OCI-LY7 (cell line): ENCODE measurements at regions of chr11 and their contacts with region 1.

Region 1: DNA sequence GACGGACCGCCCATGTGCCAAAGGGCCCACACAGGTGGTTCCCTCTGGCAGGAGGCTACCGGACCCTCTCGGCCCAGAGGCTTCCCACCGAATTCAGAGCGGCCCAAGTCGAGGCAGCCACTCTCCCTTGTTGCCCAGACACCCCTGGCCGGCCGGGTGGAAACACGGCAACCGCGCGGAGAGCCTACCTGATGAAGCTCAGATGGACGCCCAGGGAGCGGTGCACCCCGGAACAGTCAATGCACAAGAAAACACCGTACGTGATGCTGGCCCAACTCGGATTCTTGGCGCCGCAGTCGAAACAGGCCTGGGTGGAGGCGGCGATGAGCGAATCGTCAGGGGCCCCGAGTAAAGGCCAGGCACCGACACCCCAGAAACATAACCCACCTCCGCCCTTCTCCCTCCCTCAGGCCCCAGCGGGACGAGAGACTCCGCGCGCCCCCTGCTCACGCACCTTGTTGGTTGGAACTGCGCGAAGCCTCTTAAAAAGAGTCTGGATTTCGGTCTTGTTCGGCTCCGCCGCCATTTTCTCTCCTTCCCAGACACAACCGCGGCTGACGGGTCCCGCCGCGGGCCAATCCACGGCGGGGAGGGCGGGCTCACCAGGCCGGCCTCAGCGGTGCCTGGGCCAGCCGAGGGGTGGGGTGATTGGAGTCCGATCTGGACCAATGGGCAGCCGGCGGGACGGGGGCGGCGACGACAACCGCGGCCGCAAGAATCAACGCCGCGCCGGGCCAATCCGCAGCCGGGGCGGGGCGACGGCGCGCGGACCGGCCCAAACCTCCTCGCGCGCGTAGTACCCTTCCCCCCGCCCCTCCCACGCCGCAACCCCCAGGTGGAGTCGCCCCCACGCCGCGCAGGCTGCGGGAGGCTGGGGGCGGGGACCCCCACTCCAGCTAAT is at the start of gene ARFGAP2:
- DNase-seq: peak; percentile 97
- H3K4me3 ChIP-seq: peak within 1 kb of the TSS; percentile 96
- H3K27ac ChIP-seq: peak within 1 kb of the TSS; percentile 79
- H3K4me1 ChIP-seq: peaks cover 22% of the 10 kb centered on the region
- CTCF ChIP-seq: no peak
- total RNA-seq, gene ARFGAP2: 116 and 136 TPM in 2 replicates

Region 2: GRCh38 chr11:47047972-47048371 is 128.6 kb before region 1 on chr11:
- CTCF ChIA-PET with region 1: no interaction called
- POLR2A ChIA-PET with region 1: no interaction called
- intact Hi-C with region 1: no loop called
- DNase-seq: peak; percentile 61
- H3K4me3 ChIP-seq: peak overlapping the region; percentile 1
- H3K27ac ChIP-seq: peak overlapping the region; percentile 52
- H3K4me1 ChIP-seq: peaks cover 26% of the 10 kb centered on the region
- CTCF ChIP-seq: no peak

Region 3: GRCh38 chr11:47213985-47214564 is 37.5 kb after region 1 on chr11:
- CTCF ChIA-PET with region 1: interaction called, 3 read pairs
- POLR2A ChIA-PET with region 1: interaction called, 8 read pairs
- intact Hi-C with region 1: loop called (anchors 1 kb)
- DNase-seq: peak; percentile 37
- H3K4me3 ChIP-seq: peak overlapping the region; percentile 69
- H3K27ac ChIP-seq: no peak overlapping the region
- H3K4me1 ChIP-seq: peaks cover 50% of the 10 kb centered on the region
- CTCF ChIP-seq: no peak

Region 4: DNA sequence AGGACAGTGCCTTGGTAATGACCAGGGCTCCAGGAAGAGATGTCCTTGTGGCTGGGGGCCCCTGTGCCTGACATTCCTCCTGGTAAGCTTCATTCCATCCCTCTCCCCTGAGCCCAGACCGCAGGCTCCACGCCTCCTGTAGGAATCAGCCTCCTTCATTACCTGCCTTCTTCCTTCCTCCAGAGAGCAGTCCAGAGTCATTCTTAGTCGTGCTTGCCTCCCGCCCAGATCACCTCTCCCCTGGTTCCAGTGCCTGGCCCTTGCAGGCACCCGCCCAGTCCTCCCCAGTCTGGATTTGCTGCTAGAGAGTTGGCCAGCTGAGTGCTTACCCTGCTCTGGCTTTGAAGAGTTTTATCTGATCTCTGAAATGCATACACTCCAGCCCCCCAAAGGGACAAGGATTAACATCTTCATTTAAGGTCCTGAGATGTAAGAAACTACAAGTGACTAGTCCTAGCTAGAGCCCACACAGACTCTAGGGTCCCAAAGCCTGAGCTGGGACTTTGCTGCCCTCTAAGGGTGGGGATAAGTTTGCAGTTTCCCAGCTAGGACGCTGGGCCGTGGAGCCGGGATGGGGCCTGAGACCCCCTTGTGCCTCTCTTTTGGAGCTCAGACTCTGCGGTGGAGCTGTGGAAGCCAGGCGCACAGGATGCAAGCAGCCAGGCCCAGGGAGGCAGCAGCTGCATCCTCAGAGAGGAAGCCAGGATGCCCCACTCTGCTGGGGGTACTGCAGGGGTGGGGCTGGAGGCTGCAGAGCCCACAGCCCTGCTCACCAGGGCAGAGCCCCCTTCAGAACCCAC is 82.8 kb after region 1 on chr11:
- CTCF ChIA-PET with region 1: interaction called, 28 read pairs
- POLR2A ChIA-PET with region 1: interaction called, 6 read pairs
- intact Hi-C with region 1: loop called (anchors 1 kb)
- DNase-seq: peak; percentile 72
- H3K4me3 ChIP-seq: no peak overlapping the region
- H3K27ac ChIP-seq: no peak overlapping the region
- H3K4me1 ChIP-seq: peaks cover 4% of the 10 kb centered on the region
- CTCF ChIP-seq: peak; percentile 91

Region 5: GRCh38 chr11:47348859-47349258 is 172.3 kb after region 1 on chr11:
- CTCF ChIA-PET with region 1: interaction called, 3 read pairs
- POLR2A ChIA-PET with region 1: no interaction called
- intact Hi-C with region 1: loop called (anchors 2 kb)
- DNase-seq: peak; percentile 54
- H3K4me3 ChIP-seq: no peak overlapping the region
- H3K27ac ChIP-seq: no peak overlapping the region
- H3K4me1 ChIP-seq: no peaks in the 10 kb centered on the region
- CTCF ChIP-seq: peak; percentile 65

Region 6: DNA sequence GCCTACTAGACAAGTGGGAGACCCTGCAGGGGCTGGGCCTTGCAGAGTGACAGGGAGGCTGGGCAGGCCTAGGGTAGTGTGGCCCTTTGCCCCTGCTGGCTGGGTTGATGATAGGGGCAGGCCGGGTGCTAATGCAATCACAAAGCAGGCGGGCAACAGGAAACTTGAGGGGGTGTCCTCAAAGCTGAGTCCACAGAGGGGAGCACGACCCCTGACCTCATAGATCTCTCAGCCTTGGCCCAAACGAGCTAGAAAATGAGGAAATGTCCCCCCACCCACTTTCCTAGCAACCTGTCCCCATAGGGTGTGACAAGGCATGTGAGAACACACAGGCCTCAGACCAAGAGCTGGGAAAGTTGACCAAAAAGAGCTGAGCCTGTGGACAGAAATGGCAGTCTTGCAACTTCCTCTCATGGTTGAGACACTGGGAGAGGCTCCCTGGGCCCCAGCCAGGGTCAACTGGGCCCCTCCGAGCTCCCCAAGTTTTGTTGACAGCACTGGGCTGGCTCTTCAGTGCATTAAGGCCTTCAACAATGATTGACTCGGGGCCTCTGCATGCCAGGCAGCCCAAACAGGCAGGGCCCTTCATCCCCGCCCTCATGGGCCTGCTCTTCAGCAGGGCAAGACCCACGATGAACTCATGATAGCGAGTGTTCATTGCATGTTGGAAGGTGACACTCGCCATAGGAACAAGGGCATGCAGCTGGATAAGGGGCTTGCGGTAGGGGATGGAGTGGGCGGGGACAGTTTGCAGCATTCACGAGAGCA is 211.5 kb after region 1 on chr11:
- CTCF ChIA-PET with region 1: no interaction called
- POLR2A ChIA-PET with region 1: no interaction called
- intact Hi-C with region 1: no loop called
- DNase-seq: no peak
- H3K4me3 ChIP-seq: no peak overlapping the region
- H3K27ac ChIP-seq: no peak overlapping the region
- H3K4me1 ChIP-seq: peaks cover 12% of the 10 kb centered on the region
- CTCF ChIP-seq: no peak

Region 7: DNA sequence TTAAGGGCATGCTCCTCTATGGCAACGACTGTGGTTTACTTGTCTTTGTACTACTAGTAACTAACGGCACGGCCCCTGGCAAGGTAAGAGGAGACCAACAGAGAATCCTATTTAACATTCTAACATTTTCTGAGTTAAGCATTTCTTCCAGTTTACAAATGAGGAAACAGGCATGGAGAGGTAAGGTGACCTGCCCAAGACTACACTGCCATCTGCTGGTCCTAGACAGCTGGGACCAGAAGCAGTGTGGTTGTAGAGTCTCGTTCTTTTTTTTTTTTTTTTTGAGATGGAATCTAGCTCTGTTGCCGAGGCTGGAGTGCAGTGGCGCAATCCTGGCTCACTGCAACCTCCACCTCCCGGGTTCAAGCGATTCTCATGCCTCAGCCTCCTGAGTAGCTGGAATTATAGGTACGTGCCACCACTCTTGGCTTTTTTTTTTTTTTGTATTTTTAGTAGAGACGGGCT is 277.6 kb after region 1 on chr11:
- CTCF ChIA-PET with region 1: no interaction called
- POLR2A ChIA-PET with region 1: no interaction called
- intact Hi-C with region 1: loop called (anchors 2 kb)
- DNase-seq: peak; percentile 88
- H3K4me3 ChIP-seq: no peak overlapping the region
- H3K27ac ChIP-seq: no peak overlapping the region
- H3K4me1 ChIP-seq: no peaks in the 10 kb centered on the region
- CTCF ChIP-seq: peak; percentile 87

Region 8: DNA sequence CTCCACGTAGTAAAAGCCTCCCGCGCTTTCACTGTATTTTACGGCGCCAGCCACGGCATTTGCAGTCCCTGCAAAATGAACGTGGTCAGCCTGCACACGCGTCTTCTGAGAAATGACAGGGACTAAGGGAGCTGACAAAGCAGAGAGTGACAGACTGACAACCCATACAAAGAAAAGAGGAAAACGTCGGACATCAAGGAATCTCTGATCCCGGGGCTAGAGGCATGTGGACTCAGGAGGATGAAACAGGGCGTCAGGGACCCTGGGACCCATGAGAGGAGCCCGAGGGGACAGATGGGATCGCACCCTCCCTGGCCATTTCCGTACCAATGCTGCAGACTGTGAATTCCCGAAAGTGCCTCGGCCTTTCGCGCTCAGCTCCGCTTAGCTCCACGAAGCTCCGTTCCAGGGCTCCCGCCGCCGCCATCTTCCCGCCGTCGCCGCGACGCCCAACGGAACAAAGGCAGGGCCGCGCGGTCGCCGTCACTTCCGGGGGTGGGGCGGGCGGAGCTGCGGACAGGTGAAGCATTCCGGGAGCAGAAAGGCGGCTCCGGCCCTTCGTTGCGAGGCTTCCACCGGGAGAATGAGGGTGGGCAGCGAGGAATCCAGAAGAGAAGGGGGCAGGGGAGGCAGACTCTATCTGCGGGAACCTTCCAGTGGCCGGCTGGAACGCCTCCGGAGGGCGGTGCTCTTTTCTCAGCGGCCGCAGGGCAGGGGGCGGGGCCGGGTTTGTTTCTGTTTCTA is 671.5 kb after region 1 on chr11 and contains the start of gene NUP160:
- CTCF ChIA-PET with region 1: no interaction called
- POLR2A ChIA-PET with region 1: no interaction called
- intact Hi-C with region 1: loop called (anchors 5 kb)
- DNase-seq: peak; percentile 76
- H3K4me3 ChIP-seq: peak within 1 kb of the TSS; percentile 94
- H3K27ac ChIP-seq: peak within 1 kb of the TSS; percentile 59
- H3K4me1 ChIP-seq: peaks cover 50% of the 10 kb centered on the region
- CTCF ChIP-seq: no peak
- total RNA-seq, gene NUP160: 23.9 and 32.0 TPM in 2 replicates